ENCODE measurements at regions of chr14 and their contacts with region 1.

Region 1: DNA sequence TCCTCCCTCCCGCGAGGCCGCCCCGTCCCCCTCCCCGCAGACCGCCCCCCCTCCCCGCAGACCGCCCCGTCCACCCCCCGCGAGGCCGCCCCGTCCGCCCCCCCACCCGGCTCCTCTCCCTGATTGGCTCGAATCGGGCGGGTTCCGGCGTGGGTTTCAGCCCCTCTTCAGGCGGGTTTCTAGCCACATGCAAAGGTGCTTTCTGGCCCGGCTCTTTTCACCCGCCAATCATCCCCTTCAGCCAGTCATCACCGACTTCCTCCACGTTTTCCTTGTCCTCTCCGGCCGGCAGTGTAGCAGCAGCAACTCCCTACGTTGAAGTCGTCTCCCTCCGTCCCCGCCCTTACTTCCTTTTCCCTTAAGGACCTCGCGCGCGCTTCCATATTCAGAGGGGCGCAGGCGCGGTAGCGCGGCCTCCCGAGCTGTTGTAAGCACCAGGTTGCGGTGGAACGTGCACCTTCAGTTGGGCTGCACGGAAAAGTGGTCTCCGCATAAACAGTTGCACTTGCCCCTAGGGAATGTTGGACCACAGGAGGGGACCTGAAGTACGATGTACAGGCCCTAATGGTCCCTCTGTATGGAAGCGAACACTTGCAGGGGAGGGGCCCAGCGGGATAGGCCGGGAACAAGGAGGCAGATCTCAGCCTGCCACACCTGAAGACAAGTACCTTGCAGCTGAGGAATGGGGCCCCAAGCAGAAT is 44.6 kb upstream of the ESR2 start:
- DNase-seq: peak; percentile 96
- H3K4me3 ChIP-seq: peak overlapping the region; percentile 77 to 92 (median 83)
- H3K27ac ChIP-seq: peak overlapping the region; percentile 85 to 93 (median 89)
- H3K4me1 ChIP-seq: peaks cover 10 to 18% (median 14%) of the 10 kb centered on the region in 4 donors
- H3K27me3 ChIP-seq: no peaks in the 10 kb centered on the region
- CTCF ChIP-seq: no peak
- EP300 ChIP-seq: no peak
- POLR2A ChIP-seq: peak; percentile 29

Region 2: DNA sequence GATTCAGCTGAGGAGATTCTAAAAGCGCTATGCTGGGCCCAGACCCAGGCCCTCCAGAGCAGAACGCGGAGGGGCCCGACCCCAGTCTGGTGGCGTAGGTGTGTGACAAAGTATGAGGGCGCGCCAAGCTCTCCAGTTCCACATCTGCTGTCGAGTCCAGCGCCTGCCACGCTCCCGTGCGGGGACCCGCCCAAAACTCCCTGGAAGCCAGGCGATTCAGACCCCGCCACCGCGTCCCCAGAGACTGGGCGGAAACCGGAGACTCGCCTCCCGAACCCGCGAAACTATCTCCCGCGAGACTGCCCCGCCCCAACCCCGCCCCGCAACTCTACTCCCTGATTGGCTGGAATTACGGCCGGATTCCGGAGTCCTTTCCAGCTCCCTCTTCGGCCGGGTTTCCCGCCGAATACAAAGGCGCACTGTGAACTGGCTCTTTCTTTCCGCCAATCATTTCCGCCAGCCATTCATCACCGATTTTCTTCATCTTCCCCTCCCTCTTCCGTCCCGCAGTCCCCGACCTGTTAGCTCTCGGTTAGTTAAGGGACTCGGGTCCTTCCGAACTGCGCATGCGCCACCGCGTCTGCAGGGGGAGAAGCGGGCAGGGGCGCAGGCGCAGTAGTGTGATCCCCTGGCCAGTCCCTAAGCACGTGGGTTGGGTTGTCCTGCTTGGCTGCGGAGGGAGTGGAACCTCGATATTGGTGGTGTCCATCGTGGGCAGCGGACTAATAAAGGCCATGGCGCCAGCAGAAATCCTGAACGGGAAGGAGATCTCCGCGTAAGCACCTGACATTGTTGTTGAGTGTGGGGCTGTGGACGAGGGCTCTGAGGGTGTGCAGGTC is 49.1 kb after region 1 on chr14 and contains the start of gene MTHFD1:
- intact Hi-C with region 1: loop called (anchors 5 kb)
- DNase-seq: peak; percentile 99
- H3K4me3 ChIP-seq: peak within 1 kb of the TSS; percentile 64 to 75 (median 66)
- H3K27ac ChIP-seq: peak within 1 kb of the TSS; percentile 78 to 95 (median 88)
- H3K4me1 ChIP-seq: peaks cover 14 to 36% (median 32%) of the 10 kb centered on the region in 4 donors
- H3K27me3 ChIP-seq: no peaks in the 10 kb centered on the region
- CTCF ChIP-seq: peak in 1 of 3 experiments; percentile 4
- EP300 ChIP-seq: no peak
- POLR2A ChIP-seq: no peak
- total RNA-seq, gene MTHFD1: 33.3 to 39.9 (median 35.8) TPM

Region 3: GRCh38 chr14:64478634-64479250 is 140.0 kb after region 1 on chr14:
- intact Hi-C with region 1: loop called (anchors 5 kb)
- DNase-seq: no peak
- H3K4me3 ChIP-seq: no peak overlapping the region
- H3K27ac ChIP-seq: no peak overlapping the region
- H3K4me1 ChIP-seq: no peaks in the 10 kb centered on the region
- H3K27me3 ChIP-seq: no peaks in the 10 kb centered on the region
- CTCF ChIP-seq: peak; percentile 43 to 57 (median 51)
- EP300 ChIP-seq: no peak
- POLR2A ChIP-seq: no peak

Region 4: GRCh38 chr14:64503478-64504309 is 164.9 kb after region 1 on chr14 and contains the start of gene ZBTB25:
- intact Hi-C with region 1: loop called (anchors 10 kb)
- DNase-seq: peak; percentile 96
- H3K4me3 ChIP-seq: peak within 1 kb of the TSS; percentile 84 to 98 (median 86)
- H3K27ac ChIP-seq: peak within 1 kb of the TSS; percentile 91 to 100 (median 97)
- H3K4me1 ChIP-seq: peaks cover 40 to 66% (median 63%) of the 10 kb centered on the region in 4 donors
- H3K27me3 ChIP-seq: no peaks in the 10 kb centered on the region
- CTCF ChIP-seq: no peak
- EP300 ChIP-seq: no peak
- POLR2A ChIP-seq: peak; percentile 85
- total RNA-seq, gene ZBTB25: 7.3 to 13.3 (median 10.4) TPM